Activated CD4-positive, alpha-beta T cell treated with anti-CD3 and anti-CD28 coated beads, Interleukin-2, amount 10 ng/mL, durations not matched to agents 24 days and 14 days (primary cell): ENCODE measurements at regions of chr12 and their contacts with region 1.

Region 1: GRCh38 chr12:57430931-57431720 is at the start of gene R3HDM2:
- DNase-seq: peak; percentile 98
- H3K4me3 Mint-ChIP-seq: peak within 1 kb of the TSS; percentile 99
- H3K27ac Mint-ChIP-seq: peak within 1 kb of the TSS; percentile 99
- H3K4me1 Mint-ChIP-seq: peaks cover 33% of the 10 kb centered on the region
- H3K27me3 Mint-ChIP-seq: no peaks in the 10 kb centered on the region
- total RNA-seq, gene R3HDM2: 42.7 and 45.8 TPM in 2 replicates

Region 2: DNA sequence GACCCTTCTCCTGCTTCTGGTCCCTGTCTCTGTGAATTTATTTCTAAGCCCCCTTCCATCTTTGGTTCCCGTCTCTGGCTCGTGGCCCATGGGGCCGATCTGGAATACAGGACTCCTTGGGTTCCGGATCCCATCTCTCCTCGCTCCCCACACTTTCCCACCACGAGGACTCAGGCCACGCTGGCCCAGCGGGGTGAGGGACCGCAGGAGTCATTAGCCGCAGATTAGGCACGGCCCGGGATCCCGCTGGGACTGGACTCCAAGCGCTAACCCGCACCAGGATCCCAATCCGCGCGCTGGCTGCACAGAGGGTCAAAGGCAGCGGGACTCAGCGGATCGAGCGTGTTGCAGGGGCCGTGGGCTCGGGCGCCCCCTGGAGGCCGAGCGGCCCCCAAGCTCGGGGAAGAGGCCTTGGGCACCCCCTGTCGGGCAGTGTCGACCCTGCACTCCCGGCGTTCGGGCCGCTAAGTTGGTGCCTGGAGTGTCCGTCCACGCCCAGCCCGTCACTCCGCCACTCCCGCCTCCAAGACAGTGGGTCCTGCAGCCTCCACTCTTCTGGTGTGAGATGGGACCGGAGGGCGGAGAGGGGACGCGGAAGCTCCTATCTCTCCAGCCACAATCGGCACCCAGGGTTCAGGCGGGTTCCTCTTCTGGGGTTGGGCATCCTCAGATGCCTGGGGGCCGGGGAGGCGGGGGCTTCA is 192.1 kb before region 1 on chr12:
- intact Hi-C with region 1: loop called (anchors 1 kb)
- DNase-seq: peak; percentile 97
- H3K4me3 Mint-ChIP-seq: peak overlapping the region; percentile 92
- H3K27ac Mint-ChIP-seq: peak overlapping the region; percentile 91
- H3K4me1 Mint-ChIP-seq: peaks cover 64% of the 10 kb centered on the region
- H3K27me3 Mint-ChIP-seq: peaks cover 41% of the 10 kb centered on the region

Region 3: DNA sequence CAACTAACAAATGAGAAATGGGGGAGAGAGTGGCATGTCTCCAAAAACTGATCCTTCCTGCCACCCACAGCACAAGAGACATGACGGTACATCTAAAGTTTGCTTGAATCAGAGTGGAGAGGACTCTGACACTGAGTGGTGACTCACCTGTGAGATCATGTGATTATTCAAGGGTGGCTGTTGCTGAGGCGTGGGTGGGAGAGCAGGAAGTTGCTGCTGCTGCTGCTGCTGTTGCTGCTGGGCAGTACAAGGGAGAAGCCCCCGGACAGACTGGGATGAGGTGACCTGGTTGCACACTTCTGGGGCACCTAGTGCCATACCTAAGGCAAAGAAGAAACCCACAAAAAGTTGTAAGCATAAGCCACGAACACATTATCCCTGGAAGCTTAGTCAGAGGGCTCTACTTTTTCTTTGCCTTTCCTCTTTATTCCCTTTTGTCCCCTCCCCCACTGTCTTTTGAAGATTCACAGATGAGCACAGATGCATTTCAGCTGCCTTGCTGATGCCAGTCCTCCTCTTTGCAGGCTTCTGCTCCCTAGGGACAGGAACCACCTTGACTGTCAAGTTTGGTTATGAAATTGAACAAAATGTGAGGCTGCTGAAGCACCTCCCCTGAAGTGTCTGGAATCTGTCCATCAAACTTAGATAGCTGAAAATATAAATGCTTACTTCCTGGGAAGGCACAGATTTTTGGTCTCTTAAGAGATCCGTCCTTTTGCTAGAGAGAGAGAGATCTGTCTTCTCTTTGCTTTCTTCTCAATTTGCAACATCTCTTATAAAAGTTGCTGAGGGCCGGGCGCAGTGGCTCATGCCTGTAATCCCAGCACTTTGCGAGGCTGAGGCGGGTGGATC is 150.7 kb before region 1 on chr12:
- intact Hi-C with region 1: loop called (anchors 1 kb)
- DNase-seq: peak; percentile 90
- H3K4me3 Mint-ChIP-seq: peak overlapping the region; percentile 68
- H3K27ac Mint-ChIP-seq: peak overlapping the region; percentile 91
- H3K4me1 Mint-ChIP-seq: peaks cover 20% of the 10 kb centered on the region
- H3K27me3 Mint-ChIP-seq: no peaks in the 10 kb centered on the region

Region 4: GRCh38 chr12:57340104-57340503 is 91.0 kb before region 1 on chr12:
- intact Hi-C with region 1: no loop called
- DNase-seq: no peak
- H3K4me3 Mint-ChIP-seq: no peak overlapping the region
- H3K27ac Mint-ChIP-seq: no peak overlapping the region
- H3K4me1 Mint-ChIP-seq: peaks cover 6% of the 10 kb centered on the region
- H3K27me3 Mint-ChIP-seq: no peaks in the 10 kb centered on the region

Region 5: DNA sequence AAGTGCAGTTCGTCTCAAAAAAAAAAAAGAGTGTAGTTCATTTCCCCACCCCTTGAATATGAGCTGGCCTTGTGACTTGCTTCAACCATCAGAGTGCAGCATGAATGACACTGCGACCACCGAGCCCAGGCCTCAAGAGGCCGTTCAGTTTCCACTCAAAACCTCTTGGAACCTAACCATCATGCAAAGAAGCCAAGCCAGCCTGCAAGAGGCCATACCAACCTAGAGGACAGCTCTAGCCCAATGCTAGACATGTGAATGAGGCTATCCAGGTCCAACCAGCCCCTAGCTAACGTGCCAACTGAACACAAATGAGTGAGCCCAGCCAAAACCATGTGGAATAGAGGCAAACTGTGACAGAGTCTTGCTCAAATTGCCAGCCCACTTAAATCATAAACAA is 30.0 kb before region 1 on chr12:
- intact Hi-C with region 1: no loop called
- DNase-seq: no peak
- H3K4me3 Mint-ChIP-seq: no peak overlapping the region
- H3K27ac Mint-ChIP-seq: no peak overlapping the region
- H3K4me1 Mint-ChIP-seq: peaks cover 2% of the 10 kb centered on the region
- H3K27me3 Mint-ChIP-seq: no peaks in the 10 kb centered on the region